ENCODE measurements at regions of chr1 and their contacts with region 1.

Region 1: GRCh38 chr1:10507111-10507879 is 32.5 kb downstream of the PEX14 start:
- DNase-seq: peak; percentile 58
- ATAC-seq: peak; percentile 89
- H3K4me3 Mint-ChIP-seq: no peak overlapping the region
- H3K27ac Mint-ChIP-seq: peak overlapping the region; percentile 85
- H3K4me1 Mint-ChIP-seq: peaks cover 37% of the 10 kb centered on the region
- H3K27me3 Mint-ChIP-seq: no peaks in the 10 kb centered on the region
- CTCF ChIP-seq: peak; percentile 67

Region 2: DNA sequence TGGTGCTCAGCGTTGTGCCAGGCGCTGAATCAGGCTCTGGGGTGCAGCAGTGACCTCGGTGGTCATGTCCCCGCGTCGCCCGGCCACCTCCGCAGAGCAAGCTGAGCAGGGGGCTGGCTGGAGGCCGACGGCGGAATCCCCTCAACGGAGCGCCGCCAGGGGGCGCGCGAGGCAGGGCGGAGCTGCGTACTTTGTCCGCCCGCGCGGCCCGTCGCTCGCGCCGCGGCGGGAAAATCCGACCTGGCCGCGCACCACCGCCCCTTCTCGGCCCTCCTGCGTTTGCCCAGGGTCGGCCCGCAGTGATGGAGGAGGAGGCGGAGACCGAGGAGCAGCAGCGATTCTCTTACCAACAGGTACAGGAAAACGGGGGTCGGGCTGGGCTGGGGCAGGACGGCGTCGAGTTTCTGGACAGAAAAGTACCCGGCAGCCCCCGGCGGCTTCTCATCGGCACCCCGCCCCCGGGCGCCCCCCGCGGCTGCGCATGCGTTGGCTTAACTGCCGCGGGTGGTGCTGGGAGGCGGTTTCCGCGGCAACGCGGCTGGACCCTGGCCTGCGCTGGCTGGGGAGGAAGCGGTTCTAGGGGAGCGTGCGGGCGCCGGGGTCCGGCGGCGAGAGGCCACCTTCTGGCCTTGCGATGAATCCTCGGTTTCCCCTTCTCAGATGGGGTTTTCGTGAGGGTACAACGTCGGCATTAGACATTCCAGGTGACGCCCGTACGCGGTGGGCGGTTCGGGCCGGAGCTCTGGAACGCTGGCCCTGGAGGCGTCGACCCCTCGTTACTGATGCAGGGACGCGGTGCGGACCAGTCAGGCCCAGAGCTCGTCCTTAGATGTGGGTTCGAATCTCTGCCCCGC is 76.9 kb before region 1 on chr1 and contains the start of gene CENPS:
- CTCF ChIA-PET with region 1: interaction called, 34 read pairs
- POLR2A ChIA-PET with region 1: interaction called, 5 read pairs
- DNase-seq: peak; percentile 94
- ATAC-seq: peak; percentile 89
- H3K4me3 Mint-ChIP-seq: peak within 1 kb of the TSS; percentile 77
- H3K27ac Mint-ChIP-seq: peak within 1 kb of the TSS; percentile 94
- H3K4me1 Mint-ChIP-seq: peaks cover 19% of the 10 kb centered on the region
- H3K27me3 Mint-ChIP-seq: no peaks in the 10 kb centered on the region
- CTCF ChIP-seq: peak; percentile 93
- total RNA-seq, gene CENPS: 13.7 to 17.0 TPM (median 13.8 TPM) in 3 replicates

Region 3: GRCh38 chr1:10440794-10441193 is 66.5 kb before region 1 on chr1:
- CTCF ChIA-PET with region 1: no interaction called
- POLR2A ChIA-PET with region 1: no interaction called
- DNase-seq: no peak
- ATAC-seq: no peak
- H3K4me3 Mint-ChIP-seq: no peak overlapping the region
- H3K27ac Mint-ChIP-seq: 0 out of 2 replicates have a peak overlapping the region, but pooled peaks have one; percentile 63
- H3K4me1 Mint-ChIP-seq: no peaks in the 10 kb centered on the region
- H3K27me3 Mint-ChIP-seq: no peaks in the 10 kb centered on the region
- CTCF ChIP-seq: no peak

Region 4: GRCh38 chr1:10494754-10495474 is 12.4 kb before region 1 on chr1:
- CTCF ChIA-PET with region 1: interaction called, 48 read pairs
- POLR2A ChIA-PET with region 1: no interaction called
- DNase-seq: peak; percentile 84
- ATAC-seq: peak; percentile 88
- H3K4me3 Mint-ChIP-seq: no peak overlapping the region
- H3K27ac Mint-ChIP-seq: peak overlapping the region; percentile 67
- H3K4me1 Mint-ChIP-seq: peaks cover 15% of the 10 kb centered on the region
- H3K27me3 Mint-ChIP-seq: no peaks in the 10 kb centered on the region
- CTCF ChIP-seq: peak; percentile 97

Region 5: GRCh38 chr1:10530281-10530740 is 23.0 kb after region 1 on chr1:
- CTCF ChIA-PET with region 1: interaction called, 33 read pairs
- POLR2A ChIA-PET with region 1: no interaction called
- DNase-seq: peak; percentile 87
- ATAC-seq: peak; percentile 89
- H3K4me3 Mint-ChIP-seq: peak overlapping the region; percentile 53
- H3K27ac Mint-ChIP-seq: peak overlapping the region; percentile 96
- H3K4me1 Mint-ChIP-seq: peaks cover 60% of the 10 kb centered on the region
- H3K27me3 Mint-ChIP-seq: no peaks in the 10 kb centered on the region
- CTCF ChIP-seq: peak; percentile 47

Region 6: GRCh38 chr1:10639775-10640578 is 132.7 kb after region 1 on chr1:
- CTCF ChIA-PET with region 1: interaction called, 11 read pairs
- POLR2A ChIA-PET with region 1: no interaction called
- DNase-seq: peak; percentile 50
- ATAC-seq: no peak
- H3K4me3 Mint-ChIP-seq: peak overlapping the region; percentile 57
- H3K27ac Mint-ChIP-seq: no peak overlapping the region
- H3K4me1 Mint-ChIP-seq: peaks cover 6% of the 10 kb centered on the region
- H3K27me3 Mint-ChIP-seq: peaks cover 26% of the 10 kb centered on the region
- CTCF ChIP-seq: no peak

Measured in WTC11 (cell line).